Activated CD8-positive, alpha-beta T cell treated with anti-CD3 and anti-CD28 coated beads, Interleukin-2, amount 10 ng/mL, durations not matched to agents 7 days and 5 days (primary cell): ENCODE measurements at regions of chr15 and their contacts with region 1.

Region 1: DNA sequence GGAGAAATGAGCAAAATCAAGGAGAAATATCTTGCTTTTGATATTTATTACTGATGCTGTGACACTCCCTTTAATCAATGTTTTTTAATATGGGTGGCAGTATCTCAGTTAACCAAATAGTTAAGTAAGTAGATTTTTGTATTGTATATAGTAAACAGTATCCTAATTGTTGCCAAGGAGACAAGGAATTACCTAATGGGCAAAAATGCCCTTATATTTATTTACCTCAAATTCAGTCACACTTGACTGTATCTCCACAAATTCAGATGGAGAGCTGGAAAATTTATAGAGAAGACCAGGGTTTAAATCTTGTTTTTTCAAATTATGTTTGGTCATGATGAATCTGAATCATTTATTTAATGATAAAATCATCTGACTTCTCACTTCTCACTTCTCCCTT is 3.6 kb upstream of the CHD2 start:
- DNase-seq: no peak
- ATAC-seq: no peak
- H3K4me3 Mint-ChIP-seq: peak overlapping the region; percentile 26
- H3K27ac Mint-ChIP-seq: peak overlapping the region; percentile 45
- H3K4me1 Mint-ChIP-seq: peaks cover 68% of the 10 kb centered on the region
- H3K27me3 Mint-ChIP-seq: no peaks in the 10 kb centered on the region

Region 2: DNA sequence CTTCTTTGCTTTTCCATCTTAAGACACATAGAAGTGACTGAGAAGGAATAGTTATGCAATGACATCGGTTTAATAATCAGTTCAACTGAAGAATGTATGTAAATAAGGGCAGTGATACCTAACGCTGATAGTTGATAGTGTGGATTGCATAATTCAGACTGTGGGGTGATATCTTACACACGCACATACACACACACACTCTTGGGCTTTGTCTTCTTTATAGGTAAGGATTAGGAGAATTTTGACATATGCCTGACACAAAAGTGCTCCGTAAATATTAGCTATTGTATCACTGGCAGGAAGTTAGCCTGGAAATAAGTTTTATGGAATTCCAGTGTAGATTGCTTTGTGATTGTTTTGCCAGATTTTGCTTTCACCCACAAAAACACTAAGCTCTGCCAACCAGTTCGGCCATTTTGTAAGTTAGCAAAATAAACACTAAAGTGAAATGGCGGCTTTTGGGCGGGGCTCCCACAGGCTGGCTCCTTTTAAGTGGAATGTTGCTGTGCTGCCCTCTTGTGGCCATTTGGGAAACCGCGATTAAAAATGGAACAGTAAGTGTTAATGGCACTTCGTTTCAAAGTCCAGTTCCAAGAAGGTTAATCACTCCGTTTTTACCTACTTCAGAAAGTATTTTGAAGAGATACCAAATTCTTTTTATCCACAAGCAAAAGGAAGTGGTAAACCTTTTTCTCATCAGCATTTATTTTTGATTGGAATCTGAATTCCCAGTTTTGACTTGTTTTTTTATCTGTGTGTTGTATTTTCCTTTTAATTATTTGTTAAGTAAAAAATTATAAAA is 21.2 kb after region 1 on chr15:
- CTCF ChIA-PET with region 1: interaction called, 29 read pairs
- POLR2A ChIA-PET with region 1: interaction called, 123 read pairs
- DNase-seq: peak; percentile 97
- ATAC-seq: peak; percentile 36
- H3K4me3 Mint-ChIP-seq: peak overlapping the region; percentile 12
- H3K27ac Mint-ChIP-seq: peak overlapping the region; percentile 79
- H3K4me1 Mint-ChIP-seq: peaks cover 84% of the 10 kb centered on the region
- H3K27me3 Mint-ChIP-seq: no peaks in the 10 kb centered on the region